Activated CD4-positive, alpha-beta T cell treated with anti-CD3 and anti-CD28 coated beads, Interleukin-2, amount 10 ng/mL, durations not matched to agents 24 days and 14 days (primary cell): ENCODE measurements at regions of chr15 and their contacts with region 1.

Region 1: DNA sequence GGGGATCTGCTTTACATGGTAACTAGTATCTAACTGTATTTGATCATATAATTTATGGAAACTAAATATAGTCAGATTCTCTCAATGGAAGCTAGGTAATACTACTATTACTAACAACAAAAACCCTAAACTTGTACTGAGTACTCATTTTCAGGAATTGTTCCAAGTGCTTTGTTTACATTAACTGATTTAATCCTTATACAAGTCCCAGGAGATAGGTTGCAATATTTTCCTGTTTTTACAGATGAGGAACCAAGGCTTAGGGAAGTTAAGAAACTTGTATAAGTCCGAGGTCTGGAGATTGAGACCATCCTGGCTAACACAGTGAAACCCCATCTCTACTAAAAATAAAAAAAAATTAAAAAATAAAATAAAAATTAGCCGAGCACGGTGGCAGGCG is 7.5 kb upstream of the MTHFS start:
- DNase-seq: no peak
- H3K4me3 Mint-ChIP-seq: no peak overlapping the region
- H3K27ac Mint-ChIP-seq: no peak overlapping the region
- H3K4me1 Mint-ChIP-seq: peaks cover 26% of the 10 kb centered on the region
- H3K27me3 Mint-ChIP-seq: no peaks in the 10 kb centered on the region

Region 2: GRCh38 chr15:79918278-79918677 is 14.0 kb after region 1 on chr15:
- intact Hi-C with region 1: loop called (anchors 1 kb)
- DNase-seq: no peak
- H3K4me3 Mint-ChIP-seq: no peak overlapping the region
- H3K27ac Mint-ChIP-seq: no peak overlapping the region
- H3K4me1 Mint-ChIP-seq: peaks cover 15% of the 10 kb centered on the region
- H3K27me3 Mint-ChIP-seq: no peaks in the 10 kb centered on the region

Region 3: DNA sequence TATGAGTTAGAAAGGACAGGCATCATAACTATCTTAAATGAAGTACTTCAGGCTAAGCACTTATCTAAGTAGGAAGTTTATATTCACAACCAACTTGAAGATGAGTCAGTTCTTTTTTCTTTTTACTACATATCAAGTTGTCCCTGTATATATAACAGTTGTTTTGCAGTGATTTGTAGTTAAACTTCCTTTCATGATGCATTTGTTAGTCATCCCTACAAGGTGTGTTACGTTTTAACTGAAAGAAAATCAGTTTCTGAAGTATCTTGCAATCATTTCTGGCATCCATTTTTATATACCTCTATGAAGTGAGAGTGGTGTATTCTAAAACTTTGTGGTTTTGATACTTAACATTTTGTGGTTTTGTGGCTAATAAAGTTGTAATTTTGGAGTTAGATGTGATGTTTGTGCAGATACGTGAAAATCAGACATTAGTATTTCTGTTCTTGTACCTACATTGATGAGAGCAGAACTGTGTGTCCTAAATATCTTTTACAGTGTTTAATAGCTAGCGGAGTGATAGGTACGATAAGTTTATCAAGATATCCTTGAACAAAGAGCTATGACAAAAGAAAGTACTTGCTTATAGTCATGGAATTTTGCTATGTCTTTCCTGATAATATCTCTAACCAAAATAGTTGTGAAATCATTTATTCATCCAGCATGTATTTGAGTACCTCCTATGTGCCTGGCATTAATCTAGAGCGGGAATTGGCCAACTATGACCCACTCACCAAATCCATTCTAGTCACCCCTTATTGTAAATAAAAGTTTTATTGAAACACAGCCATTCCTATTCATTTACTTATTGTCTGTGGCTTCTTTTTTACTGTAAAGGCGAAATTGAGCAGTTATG is 201.6 kb after region 1 on chr15:
- intact Hi-C with region 1: no loop called
- DNase-seq: no peak
- H3K4me3 Mint-ChIP-seq: no peak overlapping the region
- H3K27ac Mint-ChIP-seq: no peak overlapping the region
- H3K4me1 Mint-ChIP-seq: peaks cover 15% of the 10 kb centered on the region
- H3K27me3 Mint-ChIP-seq: no peaks in the 10 kb centered on the region